ENCODE measurements at regions of chr7 and their contacts with region 1.

Region 1: GRCh38 chr7:40134428-40135316 is at the starts of genes MPLKIP and SUGCT:
- DNase-seq: peak; percentile 87 to 94
- ATAC-seq: peak; percentile 90 to 96 (median 90)
- H3K4me3 ChIP-seq: peak within 1 kb of the TSS; percentile 96
- H3K4me3 Mint-ChIP-seq: peak within 1 kb of the TSS; percentile 93
- H3K27ac ChIP-seq: peak within 1 kb of the TSS; percentile 86
- H3K27ac Mint-ChIP-seq: peak within 1 kb of the TSS; percentile 90
- H3K4me1 ChIP-seq: peaks cover 6% of the 10 kb centered on the region
- H3K4me1 Mint-ChIP-seq: peaks cover 22 to 24% of the 10 kb centered on the region in 2 donors
- H3K27me3 ChIP-seq: peaks cover 5% of the 10 kb centered on the region
- H3K27me3 Mint-ChIP-seq: peaks cover 13 to 15% of the 10 kb centered on the region in 2 donors
- CTCF ChIP-seq: peak; percentile 94
- total RNA-seq, gene MPLKIP: 16.0 to 26.9 (median 17.1) TPM
- total RNA-seq, gene SUGCT: 0.40 to 0.59 TPM in 2 of 3 donors, not detected in the other

Region 2: GRCh38 chr7:39732837-39733804 is 401.6 kb before region 1 on chr7:
- intact Hi-C with region 1: loop called (anchors 1 kb)
- DNase-seq: peak; percentile 93 to 98
- ATAC-seq: peak; percentile 88 to 96 (median 96)
- H3K4me3 ChIP-seq: peak overlapping the region; percentile 85
- H3K4me3 Mint-ChIP-seq: peak overlapping the region; percentile 98
- H3K27ac ChIP-seq: peak overlapping the region; percentile 92
- H3K27ac Mint-ChIP-seq: peak overlapping the region; percentile 95 to 99
- H3K4me1 ChIP-seq: peaks cover 33% of the 10 kb centered on the region
- H3K4me1 Mint-ChIP-seq: peaks cover 35 to 41% of the 10 kb centered on the region in 2 donors
- H3K27me3 ChIP-seq: no peaks in the 10 kb centered on the region
- H3K27me3 Mint-ChIP-seq: no peaks in the 10 kb centered on the region
- CTCF ChIP-seq: no peak

Region 3: GRCh38 chr7:39896840-39897239 is 237.8 kb before region 1 on chr7:
- intact Hi-C with region 1: loop called (anchors 1 kb)
- DNase-seq: no peak
- ATAC-seq: no peak
- H3K4me3 ChIP-seq: no peak overlapping the region
- H3K4me3 Mint-ChIP-seq: peak overlapping the region; percentile 25
- H3K27ac ChIP-seq: no peak overlapping the region
- H3K27ac Mint-ChIP-seq: no peak overlapping the region
- H3K4me1 ChIP-seq: peaks cover 4% of the 10 kb centered on the region
- H3K4me1 Mint-ChIP-seq: peaks cover 0 to 4% of the 10 kb centered on the region in 2 donors
- H3K27me3 ChIP-seq: no peaks in the 10 kb centered on the region
- H3K27me3 Mint-ChIP-seq: peaks cover 3 to 7% of the 10 kb centered on the region in 2 donors
- CTCF ChIP-seq: no peak

Region 4: DNA sequence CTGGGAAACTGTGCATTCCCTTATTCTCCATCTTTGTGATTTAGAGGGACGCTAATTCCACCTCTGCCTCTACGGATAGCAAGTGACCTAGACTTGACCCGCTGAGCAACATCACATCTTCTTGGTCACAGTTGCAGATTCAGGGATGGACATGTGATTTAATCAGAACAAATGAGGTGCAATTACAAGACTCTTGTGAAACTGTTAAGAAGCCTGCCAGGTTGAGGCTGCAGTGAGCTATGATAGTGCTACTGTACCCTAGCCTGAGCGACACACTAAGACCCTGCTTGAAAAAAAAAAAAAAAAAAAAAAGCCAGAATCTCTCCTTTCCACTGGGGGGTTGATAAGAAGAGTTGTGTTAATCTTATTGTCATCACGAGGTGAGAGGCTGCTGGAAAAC is 14.7 kb before region 1 on chr7:
- intact Hi-C with region 1: no loop called
- DNase-seq: no peak
- ATAC-seq: no peak
- H3K4me3 ChIP-seq: no peak overlapping the region
- H3K4me3 Mint-ChIP-seq: no peak overlapping the region
- H3K27ac ChIP-seq: no peak overlapping the region
- H3K27ac Mint-ChIP-seq: no peak overlapping the region
- H3K4me1 ChIP-seq: no peaks in the 10 kb centered on the region
- H3K4me1 Mint-ChIP-seq: peaks cover 0 to 10% of the 10 kb centered on the region in 2 donors
- H3K27me3 ChIP-seq: no peaks in the 10 kb centered on the region
- H3K27me3 Mint-ChIP-seq: no peaks in the 10 kb centered on the region
- CTCF ChIP-seq: no peak

Region 5: DNA sequence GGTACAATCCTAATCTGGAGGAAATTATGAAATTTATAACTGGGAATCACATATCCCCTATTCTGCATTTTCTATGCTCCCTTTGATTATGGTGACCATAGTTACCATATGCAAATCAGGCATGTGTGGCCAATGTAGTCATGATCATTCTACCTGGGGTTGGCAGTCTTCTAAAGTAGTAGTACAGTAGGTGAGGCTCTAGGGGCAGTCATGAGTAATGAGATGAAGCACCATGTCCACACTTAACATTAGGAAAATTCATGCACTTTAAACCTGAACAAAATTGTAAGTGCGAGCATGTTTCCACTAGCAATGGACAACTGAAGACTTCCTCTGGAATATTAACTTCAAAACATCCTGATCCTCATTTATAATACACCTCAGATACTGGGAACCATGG is 546.0 kb after region 1 on chr7:
- intact Hi-C with region 1: no loop called
- DNase-seq: no peak
- ATAC-seq: no peak
- H3K4me3 ChIP-seq: no peak overlapping the region
- H3K4me3 Mint-ChIP-seq: no peak overlapping the region
- H3K27ac ChIP-seq: no peak overlapping the region
- H3K27ac Mint-ChIP-seq: no peak overlapping the region
- H3K4me1 ChIP-seq: no peaks in the 10 kb centered on the region
- H3K4me1 Mint-ChIP-seq: no peaks in the 10 kb centered on the region
- H3K27me3 ChIP-seq: no peaks in the 10 kb centered on the region
- H3K27me3 Mint-ChIP-seq: no peaks in the 10 kb centered on the region
- CTCF ChIP-seq: no peak

Measured in natural killer cell (primary cell).